ENCODE measurements at regions of chr5 and their contacts with region 1.

Region 1: DNA sequence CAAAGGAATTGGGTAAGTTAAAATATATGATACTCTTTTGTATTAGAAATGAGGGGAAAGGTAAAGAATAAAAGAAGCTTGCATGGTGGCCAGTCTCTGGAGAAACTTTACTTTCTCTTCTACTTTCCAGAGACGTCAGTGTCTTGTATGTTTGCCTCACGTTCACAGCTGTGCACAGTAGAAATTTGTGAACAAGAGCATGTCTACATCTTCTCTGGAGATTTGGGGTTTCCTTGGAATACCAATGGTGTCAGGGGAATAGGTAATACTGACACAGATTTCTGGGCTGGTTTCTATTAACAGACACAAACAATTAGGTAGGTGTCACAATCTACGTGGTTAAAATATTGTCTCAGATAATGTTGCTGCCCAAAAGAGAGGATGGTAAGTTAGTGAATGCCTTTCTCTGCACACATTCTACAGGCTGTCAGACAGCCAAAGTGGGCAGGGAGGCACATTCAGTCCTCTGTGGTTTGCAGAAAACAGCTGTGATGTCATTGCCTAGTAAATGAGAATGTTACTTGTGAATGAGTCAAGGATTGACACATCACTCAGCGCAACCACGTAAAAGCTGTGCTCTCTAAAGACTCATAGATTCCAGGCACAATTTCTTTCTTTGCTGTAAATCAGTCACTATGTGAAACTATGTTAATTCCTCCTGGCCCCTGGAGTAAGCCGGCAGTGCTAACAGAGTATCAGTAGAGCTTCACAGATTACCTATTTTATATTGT is 397.1 kb downstream of the MAN2A1 start:
- DNase-seq: peak; percentile 81
- ATAC-seq: peak; percentile 90
- H3K4me3 Mint-ChIP-seq: peak overlapping the region; percentile 32
- H3K27ac Mint-ChIP-seq: peak overlapping the region; percentile 89
- H3K4me1 Mint-ChIP-seq: peaks cover 57% of the 10 kb centered on the region
- H3K27me3 Mint-ChIP-seq: no peaks in the 10 kb centered on the region

Region 2: GRCh38 chr5:108381954-108382783 is 1704.7 kb before region 1 on chr5 and contains the start of gene FBXL17:
- CTCF ChIA-PET with region 1: no interaction called
- POLR2A ChIA-PET with region 1: no interaction called
- intact Hi-C with region 1: loop called in 1 of 2 experiments (anchors 10 kb)
- DNase-seq: peak; percentile 95
- ATAC-seq: peak; percentile 84
- H3K4me3 Mint-ChIP-seq: peak within 1 kb of the TSS; percentile 77
- H3K27ac Mint-ChIP-seq: peak within 1 kb of the TSS; percentile 97
- H3K4me1 Mint-ChIP-seq: peaks cover 33% of the 10 kb centered on the region
- H3K27me3 Mint-ChIP-seq: no peaks in the 10 kb centered on the region
- total RNA-seq, gene FBXL17: 3.1 to 6.6 TPM

Region 3: DNA sequence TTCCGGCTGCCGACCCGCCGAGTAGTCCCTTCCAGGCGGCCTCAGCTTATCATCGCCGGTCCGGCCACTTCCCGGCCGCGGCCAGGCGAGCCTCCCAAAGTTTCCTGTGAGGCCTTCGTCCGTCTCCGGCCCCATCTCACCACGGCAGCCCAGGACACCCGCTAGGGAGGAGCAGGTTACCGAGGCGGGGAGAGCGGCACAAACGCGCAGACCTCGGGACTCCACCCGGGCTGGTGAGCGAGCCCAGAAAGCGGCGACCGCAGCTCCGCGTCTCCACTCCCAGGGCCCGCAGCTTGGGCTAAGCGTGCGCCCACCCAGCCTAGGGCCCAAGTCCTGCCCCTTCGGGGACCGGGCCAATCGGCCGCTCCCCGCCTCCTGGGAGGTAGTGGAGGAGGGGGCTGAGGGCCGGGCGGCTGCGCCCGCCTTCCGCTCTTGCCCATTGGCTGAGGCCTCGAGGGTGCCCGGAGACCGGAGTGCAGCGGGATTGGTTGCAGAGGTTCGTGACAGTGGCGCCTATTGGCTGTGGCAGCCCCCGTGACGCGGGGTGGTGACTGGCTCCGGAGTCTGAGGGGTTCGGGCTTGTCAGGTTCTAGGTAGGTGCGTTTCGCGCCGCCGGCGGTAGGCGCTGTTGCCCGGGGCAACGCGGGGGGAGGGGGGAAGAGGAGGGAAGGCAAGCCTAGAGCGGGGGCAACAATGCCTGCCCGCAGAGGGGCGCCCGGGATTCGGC is 1338.3 kb before region 1 on chr5:
- CTCF ChIA-PET with region 1: no interaction called
- POLR2A ChIA-PET with region 1: no interaction called
- intact Hi-C with region 1: loop called in 1 of 2 experiments (anchors 10 kb)
- DNase-seq: peak; percentile 98
- ATAC-seq: peak; percentile 98
- H3K4me3 Mint-ChIP-seq: peak overlapping the region; percentile 75
- H3K27ac Mint-ChIP-seq: peak overlapping the region; percentile 89
- H3K4me1 Mint-ChIP-seq: peaks cover 18% of the 10 kb centered on the region
- H3K27me3 Mint-ChIP-seq: no peaks in the 10 kb centered on the region

Region 4: DNA sequence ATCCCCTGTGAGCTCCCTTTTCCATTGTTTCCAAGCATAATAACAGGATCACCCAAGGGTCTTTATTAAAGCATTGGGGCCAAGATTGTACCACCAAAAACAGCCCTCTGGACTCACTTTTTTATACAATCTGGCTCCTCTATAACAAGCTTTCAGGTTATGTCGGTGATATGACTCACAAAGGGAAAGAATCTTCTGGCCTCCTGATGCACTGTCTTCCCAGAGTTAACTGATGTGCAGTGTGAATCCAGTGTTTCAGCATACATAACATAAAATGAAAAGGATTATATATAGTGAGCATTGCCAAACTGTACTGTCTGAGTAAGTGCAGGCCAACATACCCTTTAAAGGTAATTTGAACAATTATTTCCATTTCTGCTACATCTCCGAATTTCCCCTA is 431.0 kb before region 1 on chr5:
- CTCF ChIA-PET with region 1: no interaction called
- POLR2A ChIA-PET with region 1: no interaction called
- intact Hi-C with region 1: loop called in 1 of 2 experiments (anchors 1 kb)
- DNase-seq: no peak
- ATAC-seq: no peak
- H3K4me3 Mint-ChIP-seq: no peak overlapping the region
- H3K27ac Mint-ChIP-seq: peak overlapping the region; percentile 47
- H3K4me1 Mint-ChIP-seq: peaks cover 32% of the 10 kb centered on the region
- H3K27me3 Mint-ChIP-seq: peaks cover 18% of the 10 kb centered on the region

Region 5: GRCh38 chr5:109788596-109788995 is 298.2 kb before region 1 on chr5:
- CTCF ChIA-PET with region 1: no interaction called
- POLR2A ChIA-PET with region 1: no interaction called
- intact Hi-C with region 1: loop called in 1 of 2 experiments (anchors 2 kb)
- DNase-seq: no peak
- ATAC-seq: peak; percentile 63
- H3K4me3 Mint-ChIP-seq: no peak overlapping the region
- H3K27ac Mint-ChIP-seq: no peak overlapping the region
- H3K4me1 Mint-ChIP-seq: peaks cover 22% of the 10 kb centered on the region
- H3K27me3 Mint-ChIP-seq: no peaks in the 10 kb centered on the region

Region 6: GRCh38 chr5:109936996-109937395 is 149.8 kb before region 1 on chr5:
- CTCF ChIA-PET with region 1: interaction called, 7 read pairs
- POLR2A ChIA-PET with region 1: no interaction called
- intact Hi-C with region 1: loop called (anchors 2 to 10 kb)
- DNase-seq: peak; percentile 74
- ATAC-seq: peak; percentile 75
- H3K4me3 Mint-ChIP-seq: no peak overlapping the region
- H3K27ac Mint-ChIP-seq: peak overlapping the region; percentile 72
- H3K4me1 Mint-ChIP-seq: peaks cover 23% of the 10 kb centered on the region
- H3K27me3 Mint-ChIP-seq: peaks cover 2% of the 10 kb centered on the region

Region 7: DNA sequence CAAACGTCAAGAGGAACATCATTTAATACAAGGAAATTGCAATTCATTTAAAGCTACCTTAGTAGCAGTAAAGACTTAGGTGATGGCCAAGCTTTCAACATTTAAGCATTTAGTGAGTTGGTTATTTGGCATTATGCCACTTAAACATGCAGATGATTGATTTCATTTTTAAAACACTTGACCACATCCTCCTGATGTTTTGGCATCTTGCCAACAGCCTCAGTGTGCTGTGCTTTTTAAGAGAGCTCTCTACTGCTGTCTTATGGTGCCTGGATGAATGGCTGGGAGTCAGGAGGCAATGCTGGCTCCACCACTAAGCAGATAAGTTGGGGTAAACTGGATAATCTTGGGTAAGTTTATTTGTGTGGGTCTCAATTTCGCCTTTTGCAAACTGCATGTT is 32.6 kb before region 1 on chr5:
- CTCF ChIA-PET with region 1: interaction called, 3 read pairs
- POLR2A ChIA-PET with region 1: interaction called, 3 read pairs
- intact Hi-C with region 1: loop called (anchors 1 to 2 kb)
- DNase-seq: peak; percentile 84
- ATAC-seq: peak; percentile 94
- H3K4me3 Mint-ChIP-seq: no peak overlapping the region
- H3K27ac Mint-ChIP-seq: peak overlapping the region; percentile 76
- H3K4me1 Mint-ChIP-seq: peaks cover 28% of the 10 kb centered on the region
- H3K27me3 Mint-ChIP-seq: no peaks in the 10 kb centered on the region

Measured in activated CD4-positive, alpha-beta T cell treated with anti-CD3 and anti-CD28 coated beads for 36 hours (primary cell).